ENCODE measurements at regions of chr12 and their contacts with region 1.

Region 1: DNA sequence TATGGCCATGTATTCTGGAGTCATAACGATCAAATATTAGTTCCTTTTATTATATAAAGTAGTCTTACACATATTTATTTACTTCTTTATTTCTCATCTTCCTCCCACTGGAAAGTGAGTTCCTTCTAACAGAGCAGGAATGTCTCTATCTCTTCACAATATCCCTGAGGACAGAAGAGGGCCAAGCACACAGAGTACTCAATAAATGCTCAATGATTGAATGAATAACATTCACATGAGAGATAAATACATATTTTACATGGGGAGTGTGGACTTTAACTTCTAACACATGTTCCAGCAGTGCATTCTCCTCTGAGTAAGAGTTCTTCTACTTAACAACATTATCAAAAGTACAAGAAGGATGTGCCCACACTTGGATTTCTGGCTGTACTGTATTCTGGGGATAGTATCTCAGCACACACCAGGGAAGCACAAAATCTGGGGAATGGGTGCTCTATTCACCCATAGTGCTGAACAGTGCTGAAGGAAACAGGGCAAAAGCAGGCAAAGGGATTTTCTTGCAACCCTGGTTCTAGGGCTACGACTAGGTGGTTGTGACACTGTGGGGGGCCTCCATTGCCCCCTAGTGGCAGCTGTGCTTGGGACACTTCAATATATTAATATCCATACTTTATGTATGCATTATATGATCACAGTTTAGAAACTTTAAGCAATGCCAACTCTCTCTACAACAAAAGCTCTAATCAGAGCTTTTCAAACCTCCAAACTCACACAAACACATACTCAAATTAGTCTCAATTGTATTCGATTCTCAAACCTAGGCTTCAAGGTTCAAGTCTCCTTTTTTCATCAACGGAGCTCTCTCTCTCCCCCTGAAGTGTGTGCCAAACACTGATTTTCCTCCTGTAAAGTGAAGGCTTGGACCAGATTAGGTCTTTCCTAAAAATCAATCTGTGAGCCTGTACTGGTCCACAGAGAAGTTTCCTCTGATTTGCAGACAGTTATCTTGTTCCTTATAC is 115.5 kb downstream of the SLC2A13 start:
- DNase-seq: peak; percentile 75
- ATAC-seq: peak; percentile 78
- H3K4me3 Mint-ChIP-seq: no peak overlapping the region
- H3K27ac Mint-ChIP-seq: no peak overlapping the region
- H3K4me1 Mint-ChIP-seq: no peaks in the 10 kb centered on the region
- H3K27me3 Mint-ChIP-seq: no peaks in the 10 kb centered on the region

Region 2: DNA sequence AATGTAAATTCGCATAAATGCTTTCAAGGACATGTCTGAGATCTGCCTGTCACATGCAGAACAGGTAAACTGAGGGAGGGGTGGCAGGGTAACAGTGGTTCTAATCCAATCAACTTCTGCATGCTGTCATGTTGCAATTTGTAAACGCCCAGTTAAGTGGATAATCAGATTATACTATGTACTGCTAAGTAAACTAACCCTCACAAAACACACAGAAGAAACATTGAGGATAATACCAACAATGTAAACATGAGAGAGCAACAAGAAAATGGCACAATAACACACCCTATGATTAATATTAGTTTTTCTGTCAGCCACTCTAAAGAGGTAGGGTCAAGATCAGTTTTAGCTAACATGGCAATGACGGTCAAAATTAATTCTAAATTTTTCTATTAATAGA is 671.2 kb before region 1 on chr12:
- CTCF ChIA-PET with region 1: no interaction called
- POLR2A ChIA-PET with region 1: no interaction called
- intact Hi-C with region 1: loop called (anchors 1 to 2 kb)
- DNase-seq: no peak
- ATAC-seq: no peak
- H3K4me3 Mint-ChIP-seq: no peak overlapping the region
- H3K27ac Mint-ChIP-seq: no peak overlapping the region
- H3K4me1 Mint-ChIP-seq: no peaks in the 10 kb centered on the region
- H3K27me3 Mint-ChIP-seq: no peaks in the 10 kb centered on the region

Region 3: DNA sequence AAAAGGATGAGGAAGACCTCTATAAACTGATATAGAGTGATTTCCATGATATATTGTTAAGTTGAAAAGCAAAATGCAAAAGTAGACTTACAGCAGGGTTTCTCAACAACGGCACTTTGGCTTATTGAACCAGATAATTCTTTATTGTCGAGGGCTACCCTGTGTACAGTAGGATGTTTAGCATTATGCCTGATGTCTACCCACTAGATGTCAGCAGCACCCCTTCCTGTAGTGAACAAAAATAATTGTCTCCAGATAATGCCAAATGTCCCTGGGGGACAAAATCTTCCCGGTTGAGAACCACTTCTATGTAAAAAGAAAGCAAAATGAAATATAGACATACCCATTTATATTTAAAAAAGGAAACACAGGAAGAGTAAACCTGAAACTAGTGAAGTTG is 403.2 kb before region 1 on chr12:
- CTCF ChIA-PET with region 1: interaction called, 3 read pairs
- POLR2A ChIA-PET with region 1: no interaction called
- intact Hi-C with region 1: loop called (anchors 2 to 5 kb)
- DNase-seq: peak; percentile 21
- ATAC-seq: peak; percentile 60
- H3K4me3 Mint-ChIP-seq: no peak overlapping the region
- H3K27ac Mint-ChIP-seq: no peak overlapping the region
- H3K4me1 Mint-ChIP-seq: peaks cover 4% of the 10 kb centered on the region
- H3K27me3 Mint-ChIP-seq: no peaks in the 10 kb centered on the region

Region 4: DNA sequence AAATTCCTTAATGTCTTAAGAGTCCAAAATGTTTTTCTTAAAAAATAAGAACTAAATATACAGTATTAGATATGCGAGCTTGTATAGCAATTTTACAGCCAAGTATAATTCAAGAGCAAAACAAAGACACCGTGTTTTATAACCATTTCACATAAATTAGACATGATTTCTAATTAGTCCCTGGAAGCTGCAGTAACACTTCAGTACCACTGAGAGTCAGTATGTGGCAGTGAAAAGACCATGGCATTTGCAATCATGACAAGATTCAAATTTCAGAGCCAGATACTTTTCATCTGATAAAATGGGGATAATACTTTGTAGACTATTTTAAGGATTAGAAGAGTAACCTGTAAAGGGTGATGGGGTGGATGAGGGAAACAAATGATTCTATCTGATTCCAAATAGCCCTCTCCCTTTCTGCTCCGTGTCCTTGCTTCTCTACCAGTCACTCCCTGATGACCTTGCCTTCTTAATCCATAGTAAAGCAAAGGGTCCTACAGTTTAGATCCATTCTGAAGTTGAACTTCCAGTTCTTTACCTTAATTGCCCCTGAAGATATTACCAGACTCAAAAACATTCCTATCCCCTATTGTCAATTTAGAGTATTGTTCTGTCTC is 225.4 kb before region 1 on chr12:
- CTCF ChIA-PET with region 1: interaction called, 8 read pairs
- POLR2A ChIA-PET with region 1: no interaction called
- intact Hi-C with region 1: loop called in 1 of 2 experiments (anchors 1 kb)
- DNase-seq: no peak
- ATAC-seq: no peak
- H3K4me3 Mint-ChIP-seq: no peak overlapping the region
- H3K27ac Mint-ChIP-seq: no peak overlapping the region
- H3K4me1 Mint-ChIP-seq: no peaks in the 10 kb centered on the region
- H3K27me3 Mint-ChIP-seq: no peaks in the 10 kb centered on the region

Region 5: DNA sequence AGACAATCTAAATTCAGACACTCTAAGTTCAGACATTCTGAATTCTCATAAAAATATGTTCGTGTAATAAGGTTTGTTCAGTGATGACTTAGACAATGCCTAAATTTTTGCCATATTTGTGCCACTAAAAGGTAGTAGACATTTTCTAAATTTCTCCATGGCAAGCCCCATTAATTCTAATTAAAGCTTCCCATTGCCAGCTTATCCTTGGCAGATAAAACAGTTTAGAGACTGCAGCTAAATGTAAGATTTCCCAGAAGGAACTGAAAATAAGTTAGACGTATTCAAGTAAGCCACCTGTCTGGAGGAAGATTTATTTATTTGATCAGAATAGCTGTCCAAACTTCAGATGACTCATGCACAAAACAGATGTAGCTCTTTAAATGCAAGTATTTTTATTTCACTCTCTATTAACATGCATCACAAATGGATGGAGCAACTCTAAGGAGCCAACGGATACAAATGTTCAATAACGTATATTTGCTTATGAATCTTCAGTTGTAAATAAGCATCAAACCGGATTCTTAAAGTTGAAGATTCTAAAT is 15.0 kb before region 1 on chr12:
- CTCF ChIA-PET with region 1: interaction called, 17 read pairs
- POLR2A ChIA-PET with region 1: no interaction called
- intact Hi-C with region 1: no loop called
- DNase-seq: no peak
- ATAC-seq: no peak
- H3K4me3 Mint-ChIP-seq: no peak overlapping the region
- H3K27ac Mint-ChIP-seq: no peak overlapping the region
- H3K4me1 Mint-ChIP-seq: no peaks in the 10 kb centered on the region
- H3K27me3 Mint-ChIP-seq: no peaks in the 10 kb centered on the region

Measured in activated CD4-positive, alpha-beta T cell treated with anti-CD3 and anti-CD28 coated beads for 36 hours (primary cell).